Activated CD4-positive, alpha-beta memory T cell treated with anti-CD3 and anti-CD28 coated beads, Interleukin-2, amount 10 ng/mL, durations not matched to agents 7 days and 5 days (primary cell): ENCODE measurements at regions of chr18 and their contacts with region 1.

Region 1: GRCh38 chr18:21704603-21705364 is at the start of gene ABHD3:
- DNase-seq: peak; percentile 94
- H3K4me3 Mint-ChIP-seq: peak within 1 kb of the TSS; percentile 98
- H3K27ac Mint-ChIP-seq: peak within 1 kb of the TSS; percentile 96
- H3K4me1 Mint-ChIP-seq: peaks cover 45% of the 10 kb centered on the region
- H3K27me3 Mint-ChIP-seq: no peaks in the 10 kb centered on the region
- total RNA-seq, gene ABHD3: 49.2 to 53.5 TPM

Region 2: DNA sequence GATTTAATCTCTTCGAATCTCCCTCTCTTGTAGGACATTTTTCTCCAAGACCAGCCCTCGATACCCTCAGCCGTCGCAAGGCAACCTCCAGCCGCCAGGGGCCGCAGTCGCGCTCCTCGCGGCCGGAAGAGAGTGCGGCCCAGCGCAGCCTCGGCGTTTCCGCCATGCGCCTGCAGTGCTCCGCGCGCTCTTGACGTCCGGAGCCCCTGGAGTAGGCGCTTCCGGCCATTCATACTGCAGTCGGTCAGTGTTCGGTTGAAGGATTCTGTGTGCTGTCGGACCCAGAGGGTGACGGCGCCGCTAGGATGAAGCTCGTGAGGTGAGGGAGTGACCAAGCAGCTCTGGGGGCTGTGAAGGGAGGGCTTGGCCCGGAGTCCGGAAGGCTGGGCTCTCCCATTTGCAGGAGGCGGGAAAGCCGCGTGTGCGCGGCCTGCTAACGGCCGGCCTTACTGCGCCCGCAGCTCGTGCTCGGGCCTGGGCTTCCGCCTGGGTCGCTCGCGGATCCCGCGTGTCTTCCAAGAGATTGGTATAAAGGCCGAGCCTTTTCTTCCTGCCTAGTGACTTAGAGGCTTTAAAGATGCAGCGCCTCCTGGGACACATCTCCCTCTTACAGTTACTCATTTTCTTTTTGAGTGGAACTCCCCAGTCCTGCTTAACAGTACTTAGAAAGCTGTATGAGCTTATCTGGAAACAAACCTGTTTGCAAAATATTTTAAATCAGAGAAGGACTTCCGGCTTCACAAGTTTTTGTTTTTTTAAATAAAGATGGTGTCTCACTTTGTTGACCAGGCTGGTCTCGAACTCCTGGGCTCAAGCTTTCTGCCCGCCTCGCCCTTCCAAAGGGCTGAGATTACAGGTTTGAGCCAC is 92.4 kb before region 1 on chr18 and contains the start of gene SNRPD1:
- CTCF ChIA-PET with region 1: interaction called, 10 read pairs
- POLR2A ChIA-PET with region 1: interaction called, 16 read pairs
- DNase-seq: peak; percentile 91
- H3K4me3 Mint-ChIP-seq: peak within 1 kb of the TSS; percentile 92
- H3K27ac Mint-ChIP-seq: peak within 1 kb of the TSS; percentile 94
- H3K4me1 Mint-ChIP-seq: peaks cover 39% of the 10 kb centered on the region
- H3K27me3 Mint-ChIP-seq: no peaks in the 10 kb centered on the region
- total RNA-seq, gene SNRPD1: 96.6 to 97.5 TPM

Region 3: DNA sequence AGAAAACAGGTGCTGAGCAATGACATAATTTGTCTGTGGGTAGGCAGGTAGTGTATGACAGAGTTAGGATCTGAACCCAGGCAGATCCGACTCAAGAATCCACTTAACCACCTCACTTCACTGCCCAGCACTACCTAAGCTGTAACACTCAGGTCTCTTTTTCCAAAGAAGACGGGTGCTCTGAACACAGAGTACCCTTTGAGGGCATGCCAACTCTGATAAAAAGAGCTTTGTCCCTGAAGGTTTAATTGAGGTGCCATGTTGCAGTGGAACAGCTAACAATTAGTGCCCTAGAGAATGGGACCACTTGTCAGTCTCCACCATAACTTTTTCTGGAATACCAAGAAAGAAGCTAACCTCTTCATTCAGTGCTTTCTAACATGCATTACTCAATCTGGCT is 11.5 kb before region 1 on chr18:
- CTCF ChIA-PET with region 1: interaction called, 7 read pairs
- POLR2A ChIA-PET with region 1: interaction called, 26 read pairs
- DNase-seq: no peak
- H3K4me3 Mint-ChIP-seq: no peak overlapping the region
- H3K27ac Mint-ChIP-seq: no peak overlapping the region
- H3K4me1 Mint-ChIP-seq: peaks cover 11% of the 10 kb centered on the region
- H3K27me3 Mint-ChIP-seq: no peaks in the 10 kb centered on the region

Region 4: GRCh38 chr18:21740724-21741510 is 36.1 kb after region 1 on chr18 and contains the start of gene MIB1:
- CTCF ChIA-PET with region 1: interaction called, 7 read pairs
- POLR2A ChIA-PET with region 1: interaction called, 113 read pairs
- DNase-seq: no peak
- H3K4me3 Mint-ChIP-seq: peak within 1 kb of the TSS; percentile 92
- H3K27ac Mint-ChIP-seq: peak within 1 kb of the TSS; percentile 93
- H3K4me1 Mint-ChIP-seq: peaks cover 53% of the 10 kb centered on the region
- H3K27me3 Mint-ChIP-seq: peaks cover 5% of the 10 kb centered on the region
- total RNA-seq, gene MIB1: 57.8 to 58.3 TPM